Dorsolateral prefrontal cortex (tissue), 120 donors: ENCODE measurements at regions of chr4 and their contacts with region 1.

Region 1: DNA sequence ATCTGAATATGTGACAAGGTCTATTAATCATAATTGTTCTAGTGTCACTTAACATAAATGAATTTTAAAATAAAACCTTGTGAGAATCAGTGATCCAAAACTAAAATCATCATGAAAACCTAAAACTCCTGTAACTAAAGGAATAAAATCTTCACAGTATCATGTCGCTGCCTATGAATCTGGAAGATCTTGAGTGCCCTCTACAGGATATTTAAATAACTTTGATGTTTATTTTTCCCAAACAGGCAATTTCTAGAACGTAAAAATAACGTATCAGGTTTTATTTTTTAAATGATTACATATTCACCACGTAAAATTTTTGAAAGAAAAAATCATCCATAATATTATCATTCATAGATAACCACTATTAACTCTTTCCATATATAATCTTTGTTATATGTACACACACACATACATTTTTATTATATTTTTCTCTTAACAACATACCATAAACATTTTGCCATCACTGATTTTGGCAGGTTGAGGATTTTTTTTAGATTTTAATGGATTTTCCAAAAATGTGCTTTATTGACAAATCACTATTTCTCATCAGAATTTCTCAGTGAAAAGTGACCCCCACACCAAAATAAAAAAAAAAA is 79.6 kb downstream of the COMMD8 start:
- DNase-seq: no peak
- H3K4me3 ChIP-seq: no peak overlapping the region
- H3K27ac ChIP-seq: peak overlapping the region in 1 of 59 donors; percentile 8
- H3K27me3 ChIP-seq: no peaks in the 10 kb centered on the region
- CTCF ChIP-seq: peak; percentile 57 to 91 (median 72)

Region 2: GRCh38 chr4:46844325-46844917 is 539.5 kb before region 1 on chr4:
- intact Hi-C with region 1: loop called (anchors 5 to 10 kb)
- DNase-seq: peak in 4 of 10 donors; percentile 18 to 47 (median 31)
- H3K4me3 ChIP-seq: peak overlapping the region in 1 of 59 donors; percentile 6
- H3K27ac ChIP-seq: no peak overlapping the region
- H3K27me3 ChIP-seq: no peaks in the 10 kb centered on the region
- CTCF ChIP-seq: peak; percentile 63 to 95 (median 77)

Region 3: GRCh38 chr4:46937493-46937892 is 446.4 kb before region 1 on chr4:
- intact Hi-C with region 1: loop called (anchors 5 kb)
- DNase-seq: no peak
- H3K4me3 ChIP-seq: no peak overlapping the region
- H3K27ac ChIP-seq: no peak overlapping the region
- H3K27me3 ChIP-seq: no peaks in the 10 kb centered on the region
- CTCF ChIP-seq: peak in 47 of 56 donors; percentile 7 to 65 (median 36)

Region 4: DNA sequence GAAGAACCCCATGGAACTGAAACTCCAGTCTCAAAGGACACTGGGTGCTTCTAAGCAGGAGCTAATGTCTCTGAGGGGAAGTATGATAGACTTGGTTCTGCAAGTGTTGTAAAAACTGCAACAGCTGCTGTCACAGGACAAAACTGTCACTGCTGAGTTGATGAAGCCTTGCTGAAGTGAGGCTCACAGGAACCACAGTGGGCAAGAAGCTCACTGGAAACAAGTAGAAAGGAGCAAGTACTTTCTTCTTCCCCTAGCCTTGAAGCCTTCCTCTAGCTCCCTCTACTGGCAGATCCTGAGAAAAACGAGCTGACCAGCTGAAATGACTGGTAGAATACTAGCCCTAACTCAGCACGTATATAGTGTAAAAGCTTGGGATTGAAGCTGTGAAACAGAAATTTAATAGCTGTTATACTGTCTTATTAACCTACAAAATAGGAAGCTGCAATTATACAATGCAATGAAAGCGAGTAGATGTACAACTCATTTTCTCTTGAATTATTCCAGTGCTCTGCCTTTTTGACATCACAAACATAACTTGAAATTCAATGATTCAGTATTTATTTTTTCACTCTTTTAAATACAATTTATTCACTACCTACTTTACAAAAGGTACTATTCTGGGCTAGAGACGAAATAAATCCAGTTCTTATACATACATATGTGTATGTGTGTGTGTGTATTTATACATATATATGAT is 261.2 kb before region 1 on chr4:
- intact Hi-C with region 1: loop called in 1 of 2 experiments (anchors 5 kb)
- DNase-seq: peak in 7 of 10 donors; percentile 25 to 74 (median 40)
- H3K4me3 ChIP-seq: no peak overlapping the region
- H3K27ac ChIP-seq: peak overlapping the region in 20 of 59 donors; percentile 2 to 59 (median 30)
- H3K27me3 ChIP-seq: no peaks in the 10 kb centered on the region
- CTCF ChIP-seq: peak; percentile 50 to 94 (median 83)